Endothelial cell of umbilical vein (primary cell): ENCODE measurements at regions of chr3 and their contacts with region 1.

Region 1: GRCh38 chr3:39809181-39809994 is at the start of gene MYRIP:
- DNase-seq: peak; percentile 81
- H3K4me3 ChIP-seq: peak within 1 kb of the TSS; percentile 61 to 79 (median 70)
- H3K27ac ChIP-seq: no peak within 1 kb of the TSS
- H3K4me1 ChIP-seq: peaks cover 28% of the 10 kb centered on the region
- H3K27me3 ChIP-seq: no peaks in the 10 kb centered on the region
- CTCF ChIP-seq: no peak
- POLR2A ChIP-seq: peak; percentile 59
- total RNA-seq, gene MYRIP: 8.9 and 11.9 TPM in 2 replicates

Region 2: DNA sequence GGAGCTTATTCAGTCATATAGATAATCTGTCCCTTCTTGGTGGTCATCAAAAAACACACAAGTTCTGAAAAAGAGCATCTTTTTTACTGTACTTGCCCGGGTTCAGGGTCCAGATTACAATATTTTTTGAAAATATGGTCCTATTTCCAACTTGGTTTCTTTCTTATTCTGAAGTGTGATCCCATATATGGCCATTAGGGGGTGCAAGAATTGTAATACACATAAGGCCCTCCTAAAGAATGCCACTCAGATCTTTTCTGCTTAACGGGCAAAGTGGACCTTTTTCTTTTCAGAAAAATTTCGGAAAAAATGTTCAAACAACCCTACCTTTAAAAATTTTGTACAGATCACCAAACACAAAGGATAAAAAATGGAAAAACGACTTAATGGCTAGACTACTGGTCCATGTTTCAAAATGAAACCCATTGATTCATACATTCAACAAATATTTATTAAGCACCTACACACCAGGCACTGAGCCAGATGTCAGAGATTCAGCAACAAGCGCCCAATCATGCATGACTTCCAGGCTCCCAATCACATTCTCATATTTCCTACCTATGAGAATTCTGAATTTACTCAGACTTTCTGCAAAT is 102.0 kb before region 1 on chr3:
- CTCF ChIA-PET with region 1: interaction called, 4 read pairs
- POLR2A ChIA-PET with region 1: no interaction called
- dilution Hi-C with region 1: no loop called
- intact Hi-C with region 1: loop called (anchors 1 kb)
- DNase-seq: peak; percentile 65
- H3K4me3 ChIP-seq: no peak overlapping the region
- H3K27ac ChIP-seq: no peak overlapping the region
- H3K4me1 ChIP-seq: peaks cover 7% of the 10 kb centered on the region
- H3K27me3 ChIP-seq: no peaks in the 10 kb centered on the region
- CTCF ChIP-seq: peak; percentile 39 to 61
- POLR2A ChIP-seq: no peak

Region 3: DNA sequence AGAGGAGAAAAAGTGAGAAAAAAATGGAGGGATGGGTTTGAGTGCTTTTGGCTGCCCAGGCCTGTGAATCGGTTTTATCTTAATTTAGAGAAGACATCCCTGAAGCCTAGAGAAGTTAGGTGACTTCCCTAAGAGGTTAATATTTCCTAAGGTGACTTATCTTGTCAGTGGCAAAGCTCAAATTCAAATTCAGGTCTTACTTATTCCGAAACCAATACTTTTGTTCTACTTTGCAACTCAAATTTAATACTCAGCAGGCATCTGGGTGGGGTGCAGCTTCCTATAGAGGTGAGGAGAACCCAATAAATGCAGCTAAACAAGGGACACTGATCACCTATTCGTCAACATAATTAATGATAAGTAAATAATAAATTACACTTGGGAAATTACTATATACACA is 54.8 kb before region 1 on chr3:
- CTCF ChIA-PET with region 1: interaction called, 12 read pairs
- POLR2A ChIA-PET with region 1: no interaction called
- dilution Hi-C with region 1: no loop called
- intact Hi-C with region 1: loop called (anchors 1 kb)
- DNase-seq: no peak
- H3K4me3 ChIP-seq: no peak overlapping the region
- H3K27ac ChIP-seq: no peak overlapping the region
- H3K4me1 ChIP-seq: peaks cover 61% of the 10 kb centered on the region
- H3K27me3 ChIP-seq: no peaks in the 10 kb centered on the region
- CTCF ChIP-seq: no peak
- POLR2A ChIP-seq: no peak

Region 4: DNA sequence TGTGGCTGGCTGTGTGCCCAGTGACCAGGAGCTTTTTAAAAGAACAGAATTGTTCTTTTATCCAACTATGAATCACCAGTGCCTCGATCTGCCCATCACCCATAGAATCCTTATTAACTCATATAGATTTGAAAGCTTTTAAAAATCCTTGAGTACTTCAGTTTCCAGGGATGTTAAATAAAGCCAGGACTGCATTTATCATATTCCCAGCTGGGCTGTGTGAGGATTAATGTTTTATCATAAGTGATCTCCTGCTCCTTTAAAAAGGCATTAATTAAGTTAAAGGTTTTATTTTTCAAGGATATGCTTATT is 234.0 kb after region 1 on chr3:
- CTCF ChIA-PET with region 1: interaction called, 14 read pairs
- POLR2A ChIA-PET with region 1: no interaction called
- dilution Hi-C with region 1: no loop called
- intact Hi-C with region 1: no loop called
- DNase-seq: peak; percentile 85
- H3K4me3 ChIP-seq: no peak overlapping the region
- H3K27ac ChIP-seq: no peak overlapping the region
- H3K4me1 ChIP-seq: peaks cover 6% of the 10 kb centered on the region
- H3K27me3 ChIP-seq: no peaks in the 10 kb centered on the region
- CTCF ChIP-seq: no peak
- POLR2A ChIP-seq: no peak

Region 5: DNA sequence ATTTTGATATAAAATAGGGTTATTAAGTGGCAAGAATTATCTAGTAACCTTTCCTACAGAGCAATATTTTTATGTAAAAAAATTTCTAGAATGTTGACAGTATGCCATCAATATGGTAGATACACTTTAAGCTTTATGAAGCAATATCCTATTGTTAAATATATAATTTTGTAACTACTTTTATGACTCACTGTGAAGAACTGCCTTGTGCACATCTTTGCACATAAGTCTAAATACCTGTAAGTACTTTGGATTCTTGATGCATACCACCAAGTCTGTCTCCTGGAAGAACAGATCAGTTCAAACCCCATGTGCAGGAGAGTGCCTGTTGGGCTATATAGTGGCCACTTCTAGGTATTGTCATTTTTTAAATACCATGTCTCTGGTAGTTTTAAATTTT is 294.4 kb after region 1 on chr3:
- CTCF ChIA-PET with region 1: no interaction called
- POLR2A ChIA-PET with region 1: no interaction called
- dilution Hi-C with region 1: no loop called
- intact Hi-C with region 1: no loop called
- DNase-seq: no peak
- H3K4me3 ChIP-seq: no peak overlapping the region
- H3K27ac ChIP-seq: no peak overlapping the region
- H3K4me1 ChIP-seq: peaks cover 3% of the 10 kb centered on the region
- H3K27me3 ChIP-seq: no peaks in the 10 kb centered on the region
- CTCF ChIP-seq: no peak
- POLR2A ChIP-seq: no peak

Region 6: GRCh38 chr3:40179016-40179415 is 369.6 kb after region 1 on chr3:
- CTCF ChIA-PET with region 1: interaction called, 44 read pairs
- POLR2A ChIA-PET with region 1: no interaction called
- dilution Hi-C with region 1: no loop called
- intact Hi-C with region 1: loop called (anchors 1 kb)
- DNase-seq: peak; percentile 80
- H3K4me3 ChIP-seq: no peak overlapping the region
- H3K27ac ChIP-seq: no peak overlapping the region
- H3K4me1 ChIP-seq: no peaks in the 10 kb centered on the region
- H3K27me3 ChIP-seq: no peaks in the 10 kb centered on the region
- CTCF ChIP-seq: peak; percentile 68 to 69
- POLR2A ChIP-seq: no peak